Aorta (tissue), 5 donors: ENCODE measurements at regions of chr16 and their contacts with region 1.

Region 1: DNA sequence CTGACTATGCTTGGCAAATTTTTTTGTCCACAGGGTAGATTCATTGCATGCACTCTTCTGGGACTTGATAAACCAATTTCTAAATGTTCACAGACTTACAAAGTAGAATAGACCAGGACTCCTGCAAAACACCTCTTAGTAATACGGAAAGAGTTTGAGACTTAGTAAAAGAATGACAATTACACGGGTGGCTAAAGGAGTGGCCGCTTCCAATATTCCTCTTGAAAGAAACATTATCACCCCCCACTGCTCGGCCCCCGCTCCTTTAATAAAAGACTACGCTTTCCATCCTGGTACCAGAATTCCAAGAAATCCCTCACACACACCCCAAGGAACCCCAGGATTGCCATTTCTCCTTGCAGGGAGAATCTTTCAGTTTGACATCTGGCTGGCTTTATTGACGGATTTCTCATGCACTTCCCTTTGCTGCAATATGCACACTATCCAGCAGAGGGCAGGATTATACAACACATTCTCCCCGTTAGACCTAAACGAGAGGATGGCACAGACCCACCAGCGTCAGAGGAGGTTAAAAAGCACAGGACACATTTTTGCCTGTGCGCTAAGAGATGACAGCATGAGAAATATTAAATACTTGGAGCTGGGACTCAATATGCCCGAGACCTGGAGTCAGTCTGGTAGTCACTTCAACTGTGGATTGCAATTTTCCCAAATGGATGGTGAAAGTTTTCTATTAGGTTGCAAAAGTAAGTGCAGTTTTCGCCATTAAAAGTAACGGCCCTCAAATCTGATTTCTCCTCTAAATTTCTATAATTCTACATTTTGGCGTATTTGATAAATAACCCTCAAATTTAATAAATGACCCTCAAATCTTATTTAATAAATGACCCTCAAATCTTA is 46.6 kb upstream of the NUDT7 start:
- DNase-seq: peak in 1 of 2 donors; percentile 67
- ATAC-seq: peak; percentile 92
- H3K4me3 ChIP-seq: no peak overlapping the region
- H3K27ac ChIP-seq: no peak overlapping the region
- H3K4me1 ChIP-seq: no peaks in the 10 kb centered on the region
- H3K27me3 ChIP-seq: no peaks in the 10 kb centered on the region

Region 2: GRCh38 chr16:77788181-77789084 is 112.7 kb after region 1 on chr16 and contains the start of gene VAT1L:
- intact Hi-C with region 1: loop called in 1 of 2 experiments (anchors 10 kb)
- DNase-seq: peak; percentile 52 to 86
- ATAC-seq: peak; percentile 89
- H3K4me3 ChIP-seq: peak within 1 kb of the TSS; percentile 63 to 70
- H3K27ac ChIP-seq: no peak within 1 kb of the TSS
- H3K4me1 ChIP-seq: no peaks in the 10 kb centered on the region
- H3K27me3 ChIP-seq: no peaks in the 10 kb centered on the region
- total RNA-seq, gene VAT1L: 9.3 to 18.7 TPM

Region 3: GRCh38 chr16:77971306-77972271 is 295.9 kb after region 1 on chr16:
- intact Hi-C with region 1: loop called (anchors 2 kb)
- DNase-seq: peak; percentile 85 to 96
- ATAC-seq: peak; percentile 87
- H3K4me3 ChIP-seq: no peak overlapping the region
- H3K27ac ChIP-seq: no peak overlapping the region
- H3K4me1 ChIP-seq: no peaks in the 10 kb centered on the region
- H3K27me3 ChIP-seq: no peaks in the 10 kb centered on the region

Region 4: DNA sequence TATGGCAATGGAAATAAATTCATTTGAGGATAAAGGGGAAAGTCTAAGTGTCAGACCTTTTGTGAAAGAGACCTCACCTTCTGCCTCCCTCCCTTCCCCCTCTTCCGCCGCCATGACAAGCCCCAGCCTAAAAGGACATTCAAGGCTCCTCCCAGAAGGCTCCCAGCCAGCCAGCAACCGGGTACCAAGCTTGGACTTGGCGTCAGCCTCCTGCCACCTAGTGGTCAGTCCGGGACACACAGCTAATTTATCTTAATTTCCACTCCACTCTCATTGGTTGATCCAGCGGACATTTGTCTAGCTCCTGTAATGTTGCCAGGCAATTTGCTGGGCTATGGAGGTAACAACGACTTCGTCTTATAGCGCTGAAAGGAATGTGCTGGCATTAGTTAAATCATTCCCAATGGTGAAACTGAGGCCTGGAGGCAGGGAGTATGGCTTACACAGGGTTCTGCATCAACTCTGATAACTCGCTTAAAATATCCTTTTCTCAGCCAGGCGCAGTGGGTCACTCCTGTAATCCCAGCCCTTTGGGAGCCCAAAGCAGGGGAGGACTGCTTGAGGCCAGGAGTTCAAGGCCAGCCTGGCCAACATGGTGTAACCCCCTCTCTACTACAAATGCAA is 327.3 kb after region 1 on chr16:
- intact Hi-C with region 1: loop called (anchors 1 to 10 kb)
- DNase-seq: peak; percentile 91 to 95
- ATAC-seq: peak; percentile 92
- H3K4me3 ChIP-seq: no peak overlapping the region
- H3K27ac ChIP-seq: no peak overlapping the region
- H3K4me1 ChIP-seq: no peaks in the 10 kb centered on the region
- H3K27me3 ChIP-seq: no peaks in the 10 kb centered on the region

Region 5: DNA sequence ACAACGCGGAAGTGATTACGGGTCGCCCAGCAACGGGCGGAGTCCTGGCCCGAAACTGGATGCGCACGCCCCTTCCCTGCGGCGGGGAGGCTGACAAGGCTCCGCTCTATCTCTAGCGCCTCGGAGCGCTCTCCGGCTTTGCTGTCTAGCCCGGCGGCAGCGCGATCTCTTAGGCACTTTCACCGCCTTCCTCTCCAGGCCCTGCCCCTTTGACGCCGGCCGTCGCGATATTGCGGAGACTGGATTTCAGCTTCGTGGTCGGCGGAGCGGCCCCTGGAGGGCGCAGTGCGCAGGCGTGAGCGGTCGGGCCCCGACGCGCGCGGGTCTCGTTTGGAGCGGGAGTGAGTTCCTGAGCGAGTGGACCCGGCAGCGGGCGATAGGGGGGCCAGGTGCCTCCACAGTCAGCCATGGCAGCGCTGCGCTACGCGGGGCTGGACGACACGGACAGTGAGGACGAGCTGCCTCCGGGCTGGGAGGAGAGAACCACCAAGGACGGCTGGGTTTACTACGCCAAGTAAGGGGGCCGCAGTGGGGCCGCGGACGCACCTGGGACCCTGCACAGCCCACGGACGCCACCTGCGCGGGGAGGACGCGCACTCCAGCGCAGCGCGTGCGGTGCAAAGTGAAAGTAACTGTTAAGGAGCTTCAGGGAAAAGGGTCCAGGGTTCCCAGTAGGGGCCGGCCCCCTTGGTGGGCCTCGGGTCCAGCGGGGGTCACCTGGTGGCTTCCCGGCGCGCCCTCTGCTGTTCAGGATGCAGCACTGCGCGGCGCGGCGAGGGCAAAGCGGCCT is 423.9 kb after region 1 on chr16 and contains the start of gene WWOX:
- intact Hi-C with region 1: loop called in 1 of 2 experiments (anchors 10 kb)
- DNase-seq: peak; percentile 98 to 99
- ATAC-seq: peak; percentile 98
- H3K4me3 ChIP-seq: peak within 1 kb of the TSS; percentile 58 to 79
- H3K27ac ChIP-seq: peak within 1 kb of the TSS in 1 of 2 donors; percentile 77
- H3K4me1 ChIP-seq: no peaks in the 10 kb centered on the region
- H3K27me3 ChIP-seq: no peaks in the 10 kb centered on the region
- total RNA-seq, gene WWOX: 17.3 to 30.9 TPM